ENCODE measurements at regions of chr12 and their contacts with region 1.

Region 1: DNA sequence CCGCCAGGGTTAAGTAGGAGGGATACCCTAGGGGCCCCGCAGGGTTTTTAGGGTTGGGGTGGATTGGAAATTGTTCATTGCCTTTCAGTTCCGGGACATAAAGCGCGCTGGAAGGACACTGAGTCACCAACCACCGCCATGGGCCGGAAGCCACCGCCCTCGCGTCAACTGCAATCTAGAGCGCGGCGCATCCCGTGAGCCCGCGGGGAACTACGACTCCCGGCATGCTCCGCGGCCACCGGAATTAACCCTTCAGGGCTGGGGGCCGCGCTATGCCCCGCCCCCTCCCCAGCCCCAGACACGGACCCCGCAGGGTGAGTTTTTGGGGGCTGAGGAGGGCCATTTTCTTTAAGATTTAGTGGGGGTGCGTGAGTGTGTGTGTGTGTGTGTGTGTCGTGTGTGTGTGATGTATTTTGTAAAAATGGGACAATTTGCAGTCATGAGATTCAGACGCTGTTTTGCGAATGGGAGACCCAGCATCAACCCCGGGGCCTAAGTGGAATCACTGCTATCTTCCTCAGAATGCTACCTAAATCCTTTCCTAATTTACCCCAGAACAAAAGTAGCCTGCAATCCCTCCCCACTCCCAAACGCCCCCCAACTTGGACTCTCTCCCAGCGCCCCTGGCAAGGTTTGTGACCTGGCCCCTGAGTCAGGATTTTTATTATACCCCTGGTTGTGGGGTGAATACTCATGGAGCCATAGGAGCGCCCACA is at the start of gene MYL6B:
- DNase-seq: peak; percentile 98
- ATAC-seq: peak; percentile 92
- H3K4me3 Mint-ChIP-seq: peak within 1 kb of the TSS; percentile 88
- H3K27ac Mint-ChIP-seq: peak within 1 kb of the TSS; percentile 99
- H3K4me1 Mint-ChIP-seq: peaks cover 29% of the 10 kb centered on the region
- H3K27me3 Mint-ChIP-seq: no peaks in the 10 kb centered on the region
- total RNA-seq, gene MYL6B: 76.3 to 79.3 TPM

Region 2: DNA sequence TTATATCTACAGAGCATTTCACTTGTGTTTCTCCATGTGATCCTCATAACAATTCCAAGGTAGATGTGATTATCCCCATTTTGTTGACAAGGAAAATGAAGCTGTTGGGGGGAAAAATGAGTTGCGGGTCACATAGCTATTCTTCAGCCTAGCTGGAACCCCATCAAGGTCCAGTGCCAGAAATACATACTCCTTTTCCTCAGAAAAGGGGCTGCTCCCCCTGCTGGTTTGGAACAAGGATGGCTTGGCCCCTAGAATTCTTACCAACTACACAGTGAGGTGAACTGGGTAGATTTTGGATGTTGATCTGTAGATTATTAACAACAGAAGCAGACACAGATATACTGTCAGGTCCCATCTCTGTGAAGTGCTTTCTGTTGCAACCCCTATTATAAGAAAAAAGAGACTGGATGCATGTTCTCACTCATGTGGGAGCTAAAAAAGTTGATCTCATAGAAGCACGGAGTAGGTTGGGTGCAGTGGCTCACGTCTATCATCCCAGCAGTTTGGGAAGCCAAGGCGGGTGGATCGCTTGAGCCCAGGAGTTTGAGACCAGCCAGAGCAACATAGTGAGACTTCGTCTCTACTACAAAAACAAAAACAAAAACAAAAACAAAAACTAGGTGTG is 122.7 kb before region 1 on chr12:
- CTCF ChIA-PET with region 1: no interaction called
- POLR2A ChIA-PET with region 1: no interaction called
- intact Hi-C with region 1: no loop called
- DNase-seq: peak; percentile 63
- ATAC-seq: peak; percentile 60
- H3K4me3 Mint-ChIP-seq: no peak overlapping the region
- H3K27ac Mint-ChIP-seq: no peak overlapping the region
- H3K4me1 Mint-ChIP-seq: peaks cover 29% of the 10 kb centered on the region
- H3K27me3 Mint-ChIP-seq: no peaks in the 10 kb centered on the region

Region 3: GRCh38 chr12:56258057-56258819 is 105.8 kb after region 1 on chr12 and contains the start of gene ANKRD52:
- CTCF ChIA-PET with region 1: interaction called, 3 read pairs
- POLR2A ChIA-PET with region 1: no interaction called
- intact Hi-C with region 1: loop called in 1 of 2 experiments (anchors 1 kb)
- DNase-seq: peak; percentile 90
- ATAC-seq: peak; percentile 92
- H3K4me3 Mint-ChIP-seq: peak within 1 kb of the TSS; percentile 83
- H3K27ac Mint-ChIP-seq: peak within 1 kb of the TSS; percentile 72
- H3K4me1 Mint-ChIP-seq: peaks cover 16% of the 10 kb centered on the region
- H3K27me3 Mint-ChIP-seq: no peaks in the 10 kb centered on the region
- total RNA-seq, gene ANKRD52: 29.2 to 31.0 TPM